Sigmoid colon (tissue), 7 donors: ENCODE measurements at regions of chr7 and their contacts with region 1.

Region 1: GRCh38 chr7:104848138-104848990 is 165.6 kb upstream of the KMT2E start:
- DNase-seq: no peak
- H3K4me3 ChIP-seq: no peak overlapping the region
- H3K27ac ChIP-seq: no peak overlapping the region
- H3K4me1 ChIP-seq: no peaks in the 10 kb centered on the region
- H3K27me3 ChIP-seq: peaks cover 0 to 9% (median 0%) of the 10 kb centered on the region in 3 donors
- CTCF ChIP-seq: peak; percentile 74 to 87 (median 78)
- EP300 ChIP-seq: no peak
- POLR2A ChIP-seq: no peak

Region 2: GRCh38 chr7:104231054-104232046 is 617.0 kb before region 1 on chr7:
- intact Hi-C with region 1: loop called (anchors 5 kb)
- DNase-seq: peak; percentile 66
- H3K4me3 ChIP-seq: no peak overlapping the region
- H3K27ac ChIP-seq: no peak overlapping the region
- H3K4me1 ChIP-seq: no peaks in the 10 kb centered on the region
- H3K27me3 ChIP-seq: no peaks in the 10 kb centered on the region
- CTCF ChIP-seq: peak in 3 of 4 experiments; percentile 55 to 75 (median 64)
- EP300 ChIP-seq: no peak
- POLR2A ChIP-seq: no peak

Region 3: GRCh38 chr7:104643587-104644217 is 204.7 kb before region 1 on chr7:
- intact Hi-C with region 1: loop called (anchors 5 kb)
- DNase-seq: no peak
- H3K4me3 ChIP-seq: no peak overlapping the region
- H3K27ac ChIP-seq: no peak overlapping the region
- H3K4me1 ChIP-seq: no peaks in the 10 kb centered on the region
- H3K27me3 ChIP-seq: no peaks in the 10 kb centered on the region
- CTCF ChIP-seq: peak in 2 of 4 experiments; percentile 20 to 24
- EP300 ChIP-seq: no peak
- POLR2A ChIP-seq: no peak

Region 4: DNA sequence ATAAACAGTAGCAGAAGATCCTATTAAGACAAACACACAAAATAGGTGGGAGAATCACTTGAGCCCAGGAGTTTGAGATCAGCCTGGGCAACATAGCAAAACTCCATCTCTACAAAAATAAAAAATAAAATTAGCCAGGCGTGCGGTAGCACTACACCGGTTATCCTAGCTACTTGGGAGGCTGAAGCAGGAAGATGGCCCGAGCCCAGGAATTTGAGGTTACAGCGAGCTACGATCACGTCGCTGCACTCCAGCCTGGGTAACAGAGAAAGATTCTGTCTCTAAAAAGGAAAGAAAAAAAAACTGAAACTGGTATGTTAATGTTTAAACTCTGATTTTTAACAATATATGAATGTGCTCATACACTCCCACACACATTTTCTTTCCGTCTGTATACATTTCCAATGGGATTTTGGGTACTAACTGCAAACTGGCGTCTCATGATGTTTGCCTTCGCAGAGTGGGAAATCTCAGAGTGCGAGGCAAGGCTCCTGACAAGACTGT is 25.0 kb after region 1 on chr7:
- intact Hi-C with region 1: no loop called
- DNase-seq: no peak
- H3K4me3 ChIP-seq: no peak overlapping the region
- H3K27ac ChIP-seq: no peak overlapping the region
- H3K4me1 ChIP-seq: no peaks in the 10 kb centered on the region
- H3K27me3 ChIP-seq: no peaks in the 10 kb centered on the region
- CTCF ChIP-seq: no peak
- EP300 ChIP-seq: no peak
- POLR2A ChIP-seq: no peak

Region 5: GRCh38 chr7:104983578-104984539 is 135.5 kb after region 1 on chr7:
- intact Hi-C with region 1: no loop called
- DNase-seq: peak; percentile 94
- H3K4me3 ChIP-seq: peak overlapping the region; percentile 57 to 64 (median 62)
- H3K27ac ChIP-seq: peak overlapping the region; percentile 93 to 97 (median 96)
- H3K4me1 ChIP-seq: peaks cover 0 to 74% (median 56%) of the 10 kb centered on the region in 4 donors
- H3K27me3 ChIP-seq: no peaks in the 10 kb centered on the region
- CTCF ChIP-seq: peak in 3 of 4 experiments; percentile 49 to 69 (median 59)
- EP300 ChIP-seq: no peak
- POLR2A ChIP-seq: peak; percentile 53 to 86